Adrenal gland (tissue), 19 donors: ENCODE measurements at regions of chr7 and their contacts with region 1.

Region 1: GRCh38 chr7:112383671-112384417 is 66.4 kb upstream of the IFRD1 start:
- DNase-seq: no peak
- H3K4me3 ChIP-seq: no peak overlapping the region
- H3K27ac ChIP-seq: no peak overlapping the region
- H3K4me1 ChIP-seq: no peaks in the 10 kb centered on the region
- H3K27me3 ChIP-seq: no peaks in the 10 kb centered on the region
- CTCF ChIP-seq: peak in 1 of 6 experiments; percentile 4
- POLR2A ChIP-seq: no peak

Region 2: DNA sequence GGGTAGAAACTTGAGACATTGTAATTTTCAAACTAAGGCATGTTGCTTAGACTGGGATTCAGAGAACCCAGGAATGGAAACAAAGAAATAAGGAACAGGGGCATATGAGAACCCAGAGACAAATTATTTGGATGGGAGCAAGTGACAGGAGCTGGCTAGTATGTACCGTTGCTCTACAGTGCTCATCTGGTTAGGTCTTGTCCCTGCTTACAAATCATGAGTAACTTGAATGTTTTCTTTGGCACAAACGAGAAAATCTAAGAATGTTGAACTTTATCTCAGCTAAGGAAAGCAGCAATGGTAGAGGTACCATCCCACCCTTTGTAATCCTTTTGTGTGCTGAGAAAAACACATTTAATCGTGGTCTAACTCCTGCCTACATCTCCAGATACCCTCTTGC is 705.6 kb before region 1 on chr7:
- intact Hi-C with region 1: no loop called
- DNase-seq: no peak
- H3K4me3 ChIP-seq: no peak overlapping the region
- H3K27ac ChIP-seq: no peak overlapping the region
- H3K4me1 ChIP-seq: no peaks in the 10 kb centered on the region
- H3K27me3 ChIP-seq: no peaks in the 10 kb centered on the region
- CTCF ChIP-seq: no peak
- POLR2A ChIP-seq: no peak

Region 3: DNA sequence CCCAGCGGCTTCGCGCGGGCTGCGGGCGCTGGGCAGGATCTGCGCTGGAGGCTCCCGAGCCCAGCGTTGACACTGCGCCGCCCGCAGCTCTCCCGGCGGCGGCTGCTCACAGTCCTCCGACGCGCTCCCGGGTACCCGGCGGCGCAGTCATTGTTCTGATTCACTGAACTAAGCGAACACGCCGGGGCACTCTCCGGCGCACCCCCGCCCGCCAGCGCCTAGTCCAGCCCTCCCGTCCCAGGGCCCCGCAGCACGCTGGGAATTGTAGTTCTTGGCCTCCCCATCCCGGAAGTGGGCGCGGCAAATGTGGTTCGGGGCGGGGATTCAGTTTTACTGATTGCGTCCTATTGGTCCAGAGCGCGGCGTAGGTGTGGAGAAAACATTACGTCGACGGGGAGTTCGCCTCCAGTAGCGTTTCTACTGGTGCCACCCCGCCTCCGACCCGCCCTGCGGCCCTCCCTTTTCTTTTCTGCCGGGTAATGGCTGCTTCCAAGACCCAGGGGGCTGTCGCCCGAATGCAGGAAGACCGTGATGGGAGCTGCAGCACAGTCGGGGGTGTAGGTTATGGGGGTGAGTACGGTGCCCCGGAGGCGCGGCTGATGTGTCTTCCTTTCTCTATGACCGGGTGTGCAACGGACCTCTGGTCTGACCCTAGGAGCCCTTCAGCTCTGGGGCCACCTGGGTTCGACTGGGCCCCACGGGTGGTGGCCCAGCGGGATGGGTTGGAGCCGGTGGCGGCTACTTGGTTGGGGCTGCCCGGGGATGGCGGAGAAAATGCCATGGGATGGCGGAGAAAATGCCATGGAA is 177.4 kb before region 1 on chr7 and contains the starts of genes DOCK4 and ZNF277:
- intact Hi-C with region 1: loop called in 1 of 2 experiments (anchors 10 kb)
- DNase-seq: peak; percentile 99 to 100 (median 99)
- H3K4me3 ChIP-seq: peak within 1 kb of the TSS; percentile 39 to 92 (median 77)
- H3K27ac ChIP-seq: peak within 1 kb of the TSS; percentile 59 to 93 (median 79)
- H3K4me1 ChIP-seq: peaks cover 7 to 11% of the 10 kb centered on the region in 2 donors
- H3K27me3 ChIP-seq: no peaks in the 10 kb centered on the region
- CTCF ChIP-seq: peak in 1 of 6 experiments; percentile 10
- POLR2A ChIP-seq: peak; percentile 75 to 92
- total RNA-seq, gene DOCK4: 11.1 to 37.6 (median 22.8) TPM
- total RNA-seq, gene ZNF277: 12.6 to 28.9 (median 21.2) TPM

Region 4: DNA sequence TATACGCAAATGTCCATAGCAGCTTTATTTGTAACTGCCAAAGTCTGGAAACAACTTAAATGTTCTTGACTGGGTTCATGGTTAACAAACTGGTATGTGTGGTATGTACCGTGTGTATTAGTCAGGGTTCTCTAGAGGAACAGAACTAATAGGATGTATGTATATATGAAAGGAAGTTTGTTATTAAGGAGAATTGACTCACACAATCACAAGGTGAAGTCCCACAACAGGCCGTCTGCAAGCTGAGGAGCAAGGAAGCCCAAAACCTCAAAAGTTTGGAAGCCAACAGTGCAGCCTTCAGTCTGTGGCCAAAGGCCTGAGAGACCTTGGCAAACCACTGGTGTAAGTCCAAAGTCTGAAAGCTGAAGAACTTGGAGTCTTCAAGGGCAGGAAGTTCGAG is 339.6 kb after region 1 on chr7:
- intact Hi-C with region 1: no loop called
- DNase-seq: no peak
- H3K4me3 ChIP-seq: no peak overlapping the region
- H3K27ac ChIP-seq: no peak overlapping the region
- H3K4me1 ChIP-seq: no peaks in the 10 kb centered on the region
- H3K27me3 ChIP-seq: no peaks in the 10 kb centered on the region
- CTCF ChIP-seq: no peak
- POLR2A ChIP-seq: no peak